GM10248 (cell line): ENCODE measurements at regions of chr1 and their contacts with region 1.

Region 1: GRCh38 chr1:146007506-146008133 is 11.2 kb upstream of the TXNIP start:
- DNase-seq: no peak
- CTCF ChIP-seq: no peak

Region 2: GRCh38 chr1:145879775-145880174 is 127.8 kb before region 1 on chr1:
- CTCF ChIA-PET with region 1: no interaction called
- POLR2A ChIA-PET with region 1: no interaction called
- DNase-seq: no peak
- CTCF ChIP-seq: no peak

Region 3: GRCh38 chr1:145957443-145958319 is 49.9 kb before region 1 on chr1 and contains the start of gene LIX1L:
- CTCF ChIA-PET with region 1: interaction called, 10 read pairs
- POLR2A ChIA-PET with region 1: no interaction called
- DNase-seq: peak; percentile 95
- CTCF ChIP-seq: no peak

Region 4: DNA sequence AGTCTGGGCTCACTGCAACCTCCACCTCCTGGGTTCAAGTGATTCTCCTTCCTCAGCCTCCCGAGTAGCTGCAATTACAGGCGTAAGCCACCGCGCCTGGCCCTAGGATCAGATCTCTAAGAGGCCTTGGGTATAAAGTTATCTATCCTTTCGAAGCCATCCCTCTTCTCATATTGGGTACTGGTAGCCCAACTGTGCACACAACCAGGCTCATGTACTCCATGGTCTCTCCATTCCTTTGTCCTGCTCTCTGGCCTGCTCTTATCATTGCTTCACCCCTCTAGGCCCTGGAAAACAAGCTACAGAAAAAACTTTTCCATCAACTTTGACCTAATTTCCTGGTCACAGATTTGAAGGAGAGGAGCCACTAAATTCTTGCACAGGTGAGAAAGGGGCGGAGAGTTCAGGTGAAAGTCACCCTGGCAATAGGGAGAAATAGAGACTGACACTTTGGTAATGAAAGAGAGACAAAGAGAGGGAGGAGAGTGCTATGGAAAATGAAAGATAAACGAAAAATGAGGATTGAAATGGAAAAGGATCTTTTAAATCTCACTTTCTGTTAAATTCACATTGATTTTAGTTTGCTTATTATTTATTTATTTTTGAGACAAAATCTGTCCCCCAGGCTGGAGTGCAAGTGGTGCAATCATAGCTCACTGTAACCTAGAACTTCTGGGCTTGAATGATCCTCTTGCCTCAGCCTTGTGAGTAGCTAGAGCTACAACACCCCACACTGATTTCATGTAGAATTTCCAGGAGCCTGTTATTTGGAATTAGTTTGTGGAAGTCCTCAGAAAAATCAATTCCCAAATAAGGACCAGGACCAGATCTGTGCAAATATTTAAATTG is 17.1 kb before region 1 on chr1:
- CTCF ChIA-PET with region 1: interaction called, 11 read pairs
- POLR2A ChIA-PET with region 1: interaction called, 3 read pairs
- DNase-seq: no peak
- CTCF ChIP-seq: no peak

Region 5: DNA sequence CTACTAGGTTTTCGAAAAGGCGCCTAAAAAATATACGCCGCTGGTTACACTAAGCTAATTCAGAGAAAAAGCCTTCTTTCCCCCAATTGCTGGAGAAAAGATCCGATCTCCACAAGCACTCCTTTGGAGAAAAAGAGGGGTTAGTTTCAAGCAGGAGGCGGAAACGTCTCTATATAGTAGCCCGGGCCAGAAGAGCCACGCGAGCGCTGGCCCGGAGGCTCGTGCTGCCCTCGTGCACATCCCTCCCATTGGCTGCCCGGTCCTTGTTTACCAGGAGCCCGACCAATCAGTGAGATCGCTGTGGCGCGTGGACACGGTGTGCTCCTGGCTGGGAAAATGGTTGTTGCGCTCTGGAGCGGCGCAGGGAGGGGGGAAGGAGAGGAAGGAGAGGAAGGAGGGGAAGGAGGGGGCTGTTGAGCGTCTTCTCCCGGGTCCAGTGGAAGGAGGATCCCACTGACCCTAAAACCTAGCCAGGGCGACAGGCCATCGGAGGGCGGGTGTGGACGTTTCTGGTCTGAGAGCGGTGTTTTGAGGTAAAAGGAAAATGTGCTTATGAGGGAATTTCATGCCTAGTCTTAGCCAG is 11.1 kb before region 1 on chr1 and contains the start of gene TXNIP:
- CTCF ChIA-PET with region 1: interaction called, 15 read pairs
- POLR2A ChIA-PET with region 1: no interaction called
- DNase-seq: peak; percentile 96
- CTCF ChIP-seq: no peak

Region 6: GRCh38 chr1:146019231-146020057 is 11.8 kb after region 1 on chr1:
- CTCF ChIA-PET with region 1: interaction called, 16 read pairs
- POLR2A ChIA-PET with region 1: no interaction called
- DNase-seq: no peak
- CTCF ChIP-seq: no peak

Region 7: DNA sequence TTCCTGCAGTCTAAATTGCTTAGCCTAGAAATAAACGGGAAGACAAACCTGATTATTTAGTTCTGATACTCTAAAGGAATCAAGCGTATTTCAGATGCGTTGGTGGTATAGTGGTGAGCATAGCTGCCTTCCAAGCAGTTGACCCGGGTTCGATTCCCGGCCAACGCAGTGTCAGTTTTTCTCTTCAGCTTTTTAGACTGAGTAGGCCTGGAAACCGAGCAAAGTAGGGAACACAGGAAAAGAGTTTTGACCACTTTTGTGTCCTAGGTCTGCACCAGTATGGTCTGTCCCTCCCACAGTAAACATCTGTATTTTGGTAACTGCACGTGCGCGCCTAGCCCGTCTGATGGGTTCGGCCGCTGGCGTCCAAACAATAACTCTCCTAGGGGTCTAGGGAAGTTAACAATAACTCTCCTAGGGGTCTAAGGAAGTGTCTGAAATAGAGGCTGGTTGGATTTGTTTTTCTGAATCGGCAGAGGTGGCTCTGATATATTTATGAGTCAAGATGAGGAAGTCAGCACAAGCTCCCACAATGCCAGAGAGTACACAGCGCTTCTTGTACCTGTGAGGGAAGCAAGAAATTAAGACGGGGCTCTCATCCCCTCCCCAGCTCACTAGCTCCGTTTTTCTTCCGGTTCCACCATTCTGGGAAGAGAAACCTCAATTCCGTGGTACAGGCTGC is 29.5 kb after region 1 on chr1:
- CTCF ChIA-PET with region 1: interaction called, 13 read pairs
- POLR2A ChIA-PET with region 1: no interaction called
- DNase-seq: peak; percentile 58
- CTCF ChIP-seq: no peak